Caco-2 (cell line): ENCODE measurements at regions of chr4 and their contacts with region 1.

Region 1: DNA sequence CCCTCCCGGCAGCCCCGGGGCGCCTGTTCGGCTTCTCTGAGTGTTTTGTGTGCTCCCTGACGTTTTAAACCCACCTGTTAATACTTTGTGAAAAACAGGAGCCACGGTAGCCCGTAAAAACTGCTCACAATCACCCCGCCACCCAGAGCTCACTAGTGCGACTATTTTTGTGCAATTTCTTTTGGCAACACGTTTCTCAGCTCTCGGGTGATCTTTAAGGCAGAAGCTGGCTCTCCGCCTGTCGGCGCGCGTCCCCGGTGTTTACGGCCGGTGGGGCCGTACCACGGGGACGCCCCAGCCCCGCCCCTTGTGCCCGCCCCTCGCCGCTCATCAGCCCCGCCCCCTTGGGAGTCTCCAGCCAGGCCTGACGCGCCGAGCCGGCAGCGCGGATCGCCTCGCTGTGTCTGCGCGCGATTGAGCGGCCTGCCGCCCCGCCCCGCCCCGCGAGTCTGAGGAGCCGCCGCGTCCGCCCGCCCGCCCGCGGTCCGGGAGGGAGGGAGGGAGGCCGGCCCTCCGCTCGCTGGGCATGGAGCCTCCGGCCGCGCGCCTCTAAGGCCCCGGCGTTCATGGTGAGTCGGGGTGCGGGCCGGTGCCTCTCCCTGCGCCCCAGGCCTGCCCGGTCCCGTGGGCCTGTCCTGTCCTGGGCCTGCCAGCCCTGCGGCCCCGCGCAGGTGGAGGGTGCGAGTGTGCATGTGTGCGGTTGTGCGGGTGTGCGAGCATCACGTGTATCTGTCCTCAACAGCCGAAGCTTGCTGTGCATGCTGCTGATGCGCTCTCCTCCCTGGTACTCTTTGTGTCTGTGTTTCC is 56.2 kb upstream of the TADA2B start:
- DNase-seq: peak; percentile 92 to 96
- H3K4me3 ChIP-seq: peak overlapping the region; percentile 91
- H3K4me3 Mint-ChIP-seq: peak overlapping the region; percentile 84
- H3K27ac Mint-ChIP-seq: peak overlapping the region; percentile 79
- H3K4me1 ChIP-seq: peaks cover 29% of the 10 kb centered on the region
- H3K4me1 Mint-ChIP-seq: peaks cover 30% of the 10 kb centered on the region
- H3K27me3 ChIP-seq: no peaks in the 10 kb centered on the region
- H3K27me3 Mint-ChIP-seq: no peaks in the 10 kb centered on the region
- CTCF ChIP-seq: peak in 1 of 2 experiments; percentile 6

Region 2: GRCh38 chr4:6909073-6909965 is 77.7 kb before region 1 on chr4 and contains the start of gene TBC1D14:
- CTCF ChIA-PET with region 1: no interaction called
- POLR2A ChIA-PET with region 1: interaction called, 4 read pairs
- intact Hi-C with region 1: loop called (anchors 2 kb)
- DNase-seq: peak; percentile 90
- H3K4me3 ChIP-seq: peak within 1 kb of the TSS; percentile 83
- H3K4me3 Mint-ChIP-seq: peak within 1 kb of the TSS; percentile 94
- H3K27ac Mint-ChIP-seq: peak within 1 kb of the TSS; percentile 89
- H3K4me1 ChIP-seq: peaks cover 23% of the 10 kb centered on the region
- H3K4me1 Mint-ChIP-seq: peaks cover 27% of the 10 kb centered on the region
- H3K27me3 ChIP-seq: no peaks in the 10 kb centered on the region
- H3K27me3 Mint-ChIP-seq: no peaks in the 10 kb centered on the region
- CTCF ChIP-seq: peak in 1 of 2 experiments; percentile 16
- total RNA-seq, gene TBC1D14: 54.0 and 57.6 TPM in 2 replicates

Region 3: DNA sequence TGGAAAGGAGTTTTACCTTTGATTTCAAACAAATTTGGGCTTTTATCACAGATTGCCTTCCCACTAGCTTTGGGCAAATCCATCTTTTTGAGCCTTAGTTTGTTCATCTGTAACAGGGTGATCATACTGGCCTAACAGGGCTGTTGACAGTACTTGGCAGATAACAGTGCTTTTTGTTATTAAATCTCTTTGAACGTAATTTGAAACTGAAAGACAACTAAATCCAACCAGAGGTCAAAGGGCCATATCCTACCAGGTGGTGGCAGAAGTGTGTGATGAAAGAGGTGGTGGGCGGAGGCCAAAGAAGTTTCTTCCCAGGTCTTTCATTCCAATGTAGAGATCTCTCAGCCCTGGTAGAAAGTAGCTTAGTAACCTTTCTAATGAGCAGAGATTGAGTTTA is 21.0 kb after region 1 on chr4:
- CTCF ChIA-PET with region 1: no interaction called
- POLR2A ChIA-PET with region 1: no interaction called
- intact Hi-C with region 1: loop called (anchors 2 kb)
- DNase-seq: peak in 1 of 2 experiments; percentile 55
- H3K4me3 ChIP-seq: no peak overlapping the region
- H3K4me3 Mint-ChIP-seq: no peak overlapping the region
- H3K27ac Mint-ChIP-seq: no peak overlapping the region
- H3K4me1 ChIP-seq: peaks cover 12% of the 10 kb centered on the region
- H3K4me1 Mint-ChIP-seq: peaks cover 19% of the 10 kb centered on the region
- H3K27me3 ChIP-seq: no peaks in the 10 kb centered on the region
- H3K27me3 Mint-ChIP-seq: no peaks in the 10 kb centered on the region
- CTCF ChIP-seq: no peak